T-cell (primary cell): ENCODE measurements at regions of chr2 and their contacts with region 1.

Region 1: DNA sequence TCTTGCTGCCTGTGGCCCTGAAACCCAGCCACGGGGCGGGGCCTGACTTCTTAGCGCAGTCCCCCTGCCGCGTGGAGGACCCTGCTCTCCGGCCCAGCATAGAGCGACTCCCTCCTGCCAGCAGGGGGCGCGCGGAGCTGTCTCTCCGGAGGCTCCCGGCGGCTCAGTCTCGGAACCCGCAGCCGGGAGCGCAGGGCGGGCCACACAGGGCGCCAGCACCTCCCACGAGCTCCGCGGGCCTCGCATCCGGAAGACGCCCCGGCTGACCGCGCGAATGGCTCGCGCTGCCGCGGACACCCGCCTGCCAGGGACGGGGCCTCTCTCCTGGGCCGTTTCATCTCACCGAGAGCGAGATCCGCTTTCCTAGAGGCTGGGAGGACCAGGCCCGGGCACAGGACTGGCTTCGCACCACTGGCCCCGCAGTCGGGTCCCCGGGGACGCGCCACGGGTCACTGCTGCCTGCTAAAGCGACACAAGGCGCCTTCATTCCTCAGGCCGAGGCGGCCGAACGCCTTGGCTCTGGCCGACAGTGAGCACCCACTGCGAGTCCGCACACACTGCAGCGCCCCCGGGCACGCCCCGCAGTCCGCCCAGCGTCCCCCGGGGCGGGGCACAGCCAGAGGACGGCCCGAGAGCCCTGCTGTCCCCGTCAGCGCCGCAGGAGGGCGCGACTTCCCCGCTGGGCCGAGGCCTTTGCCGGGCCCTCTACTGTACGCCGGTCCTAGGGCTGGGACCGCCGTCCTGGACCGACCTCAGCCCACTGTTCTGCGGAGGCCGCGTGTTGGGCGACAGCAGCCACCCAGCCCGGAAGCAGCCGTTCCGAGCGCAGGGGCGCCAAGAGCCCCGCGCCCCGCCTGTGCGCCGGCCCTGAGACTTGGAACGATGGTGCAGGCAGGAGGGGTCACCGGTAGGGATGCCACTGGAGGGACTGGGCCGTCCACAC is 39.0 kb upstream of the ARHGEF4 start:
- DNase-seq: peak; percentile 71 to 94 (median 85)
- ATAC-seq: peak; percentile 90 to 94 (median 90)
- H3K4me3 ChIP-seq: peak overlapping the region; percentile 89 to 98
- H3K4me3 Mint-ChIP-seq: peak overlapping the region; percentile 66 to 77 (median 70)
- H3K27ac ChIP-seq: peak overlapping the region; percentile 92
- H3K27ac Mint-ChIP-seq: peak overlapping the region; percentile 52 to 61
- H3K4me1 ChIP-seq: peaks cover 0 to 20% of the 10 kb centered on the region in 2 experiments
- H3K4me1 Mint-ChIP-seq: peaks cover 0 to 10% (median 6%) of the 10 kb centered on the region in 3 donors
- H3K27me3 ChIP-seq: peaks cover 4 to 15% of the 10 kb centered on the region in 2 experiments
- H3K27me3 Mint-ChIP-seq: peaks cover 0 to 5% of the 10 kb centered on the region in 2 donors

Region 2: DNA sequence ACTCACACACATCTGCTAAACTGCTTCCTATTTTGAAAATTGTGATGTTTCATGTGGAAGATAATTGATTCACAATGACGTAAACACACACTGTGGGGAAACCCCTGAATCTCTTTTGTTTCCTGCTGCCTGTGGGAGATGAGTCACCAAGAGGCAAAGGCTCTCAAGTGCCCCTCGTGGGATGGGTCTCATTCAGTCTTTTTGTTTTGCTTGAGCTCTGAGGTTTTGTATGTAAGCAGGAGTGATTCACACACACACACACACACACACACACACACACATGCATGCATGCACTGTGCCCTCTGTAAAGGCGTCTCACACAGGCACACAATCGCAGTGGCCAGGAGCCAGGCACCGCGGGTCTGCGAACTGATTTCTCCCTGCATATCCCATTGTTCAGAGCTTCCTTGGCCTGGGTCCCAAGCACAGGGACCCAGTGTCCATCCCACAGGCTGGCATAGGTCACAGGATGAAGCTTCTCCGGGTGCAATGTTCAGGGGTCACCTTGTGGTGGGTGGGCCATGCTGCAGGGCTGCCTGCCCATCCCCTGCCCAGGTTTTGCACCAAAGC is 26.8 kb after region 1 on chr2:
- CTCF ChIA-PET with region 1: interaction called in 1 of 2 experiments, 12 read pairs
- POLR2A ChIA-PET with region 1: interaction called in 1 of 2 experiments, 3 read pairs
- DNase-seq: peak; percentile 12 to 85 (median 58)
- ATAC-seq: peak; percentile 94 to 96 (median 96)
- H3K4me3 ChIP-seq: no peak overlapping the region
- H3K4me3 Mint-ChIP-seq: peak overlapping the region; percentile 17 to 41 (median 25)
- H3K27ac ChIP-seq: peak overlapping the region; percentile 68
- H3K27ac Mint-ChIP-seq: peak overlapping the region; percentile 81 to 84
- H3K4me1 ChIP-seq: peaks cover 0 to 22% of the 10 kb centered on the region in 2 experiments
- H3K4me1 Mint-ChIP-seq: peaks cover 6 to 19% (median 17%) of the 10 kb centered on the region in 3 donors
- H3K27me3 ChIP-seq: peaks cover 0 to 9% of the 10 kb centered on the region in 2 experiments
- H3K27me3 Mint-ChIP-seq: peaks cover 0 to 2% of the 10 kb centered on the region in 2 donors

Region 3: GRCh38 chr2:130873700-130874346 is 76.1 kb after region 1 on chr2:
- CTCF ChIA-PET with region 1: interaction called, 12 to 24 read pairs
- POLR2A ChIA-PET with region 1: interaction called in 1 of 2 experiments, 3 read pairs
- DNase-seq: peak in 34 of 35 experiments; percentile 11 to 77 (median 53)
- ATAC-seq: peak; percentile 70 to 78 (median 72)
- H3K4me3 ChIP-seq: no peak overlapping the region
- H3K4me3 Mint-ChIP-seq: no peak overlapping the region
- H3K27ac ChIP-seq: no peak overlapping the region
- H3K27ac Mint-ChIP-seq: no peak overlapping the region
- H3K4me1 ChIP-seq: no peaks in the 10 kb centered on the region
- H3K4me1 Mint-ChIP-seq: no peaks in the 10 kb centered on the region
- H3K27me3 ChIP-seq: peaks cover 0 to 25% of the 10 kb centered on the region in 2 experiments
- H3K27me3 Mint-ChIP-seq: peaks cover 12 to 14% of the 10 kb centered on the region in 2 donors